Common myeloid progenitor, CD34-positive (primary cell): ENCODE measurements at regions of chr14 and their contacts with region 1.

Region 1: DNA sequence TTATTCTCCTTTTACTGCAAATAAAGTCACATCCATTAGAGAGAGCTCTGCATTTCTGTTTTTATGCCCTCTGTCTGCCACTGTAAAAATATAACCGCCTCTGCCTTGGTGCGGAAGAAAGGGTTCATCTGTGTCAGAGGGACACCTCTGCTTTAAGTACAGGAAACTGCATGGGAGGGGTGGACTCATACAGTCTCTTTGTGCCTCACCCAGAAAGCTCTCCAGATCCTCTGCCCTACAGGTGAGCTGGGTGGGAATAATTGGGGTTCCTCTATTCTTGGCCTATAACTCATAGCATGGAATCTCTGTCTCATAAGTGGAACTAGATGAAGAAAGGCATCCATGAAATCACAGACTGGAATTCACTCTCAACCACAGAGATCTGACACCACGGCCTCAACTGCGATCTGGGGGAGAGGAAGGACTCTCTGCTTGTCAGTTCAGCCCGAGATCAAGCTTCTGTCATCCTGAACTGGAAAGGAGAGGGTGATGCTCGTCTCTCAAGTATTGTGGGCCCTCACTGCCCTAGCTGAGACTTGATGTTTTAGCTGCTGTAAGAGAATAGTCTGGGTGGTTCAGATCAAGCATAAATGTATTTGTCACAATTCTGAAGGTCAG is 702.3 kb downstream of the TMEM121 start:
- DNase-seq: no peak
- H3K4me3 ChIP-seq: no peak overlapping the region
- H3K27ac ChIP-seq: no peak overlapping the region
- H3K4me1 ChIP-seq: peaks cover 6 to 34% (median 17%) of the 10 kb centered on the region in 4 experiments
- H3K27me3 ChIP-seq: no peaks in the 10 kb centered on the region

Region 2: GRCh38 chr14:106069804-106070625 is 158.6 kb before region 1 on chr14:
- CTCF ChIA-PET with region 1: no interaction called
- POLR2A ChIA-PET with region 1: no interaction called
- DNase-seq: peak; percentile 63 to 89 (median 83)
- H3K4me3 ChIP-seq: no peak overlapping the region
- H3K27ac ChIP-seq: no peak overlapping the region
- H3K4me1 ChIP-seq: peaks cover 0 to 17% (median 9%) of the 10 kb centered on the region in 4 experiments
- H3K27me3 ChIP-seq: no peaks in the 10 kb centered on the region

Region 3: GRCh38 chr14:106174206-106174605 is 54.4 kb before region 1 on chr14:
- CTCF ChIA-PET with region 1: no interaction called
- POLR2A ChIA-PET with region 1: no interaction called
- DNase-seq: peak in 2 of 3 donors; percentile 28 to 56
- H3K4me3 ChIP-seq: peak overlapping the region in 1 of 7 experiments; percentile 5
- H3K27ac ChIP-seq: no peak overlapping the region
- H3K4me1 ChIP-seq: peaks cover 0 to 3% (median 0%) of the 10 kb centered on the region in 4 experiments
- H3K27me3 ChIP-seq: peaks cover 0 to 12% (median 0%) of the 10 kb centered on the region in 5 experiments

Region 4: DNA sequence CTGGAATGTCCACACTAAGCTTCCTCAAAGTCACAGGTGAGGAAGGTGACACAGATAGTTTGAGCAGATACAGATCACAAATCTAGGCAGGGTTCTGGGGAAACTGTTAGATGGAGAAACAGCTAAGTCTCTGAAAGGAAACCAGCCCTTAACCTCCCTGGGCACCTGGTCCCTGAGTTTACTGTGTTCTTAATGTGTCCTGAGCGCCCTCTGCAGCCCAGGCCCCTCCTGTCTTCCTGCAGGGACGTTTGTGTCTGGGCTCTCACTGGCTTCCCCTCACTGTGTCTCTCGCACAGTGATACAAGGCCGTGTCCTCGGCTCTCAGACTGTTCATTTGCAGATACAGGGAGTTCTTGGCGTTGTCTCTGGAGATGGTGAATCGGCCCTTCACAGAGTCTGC is 18.0 kb before region 1 on chr14:
- CTCF ChIA-PET with region 1: interaction called, 14 read pairs
- POLR2A ChIA-PET with region 1: no interaction called
- DNase-seq: peak in 2 of 3 donors; percentile 69 to 75
- H3K4me3 ChIP-seq: no peak overlapping the region
- H3K27ac ChIP-seq: no peak overlapping the region
- H3K4me1 ChIP-seq: peaks cover 0 to 5% (median 0%) of the 10 kb centered on the region in 4 experiments
- H3K27me3 ChIP-seq: peaks cover 0 to 11% (median 0%) of the 10 kb centered on the region in 5 experiments

Region 5: GRCh38 chr14:106218174-106218573 is 10.5 kb before region 1 on chr14:
- CTCF ChIA-PET with region 1: interaction called, 10 read pairs
- POLR2A ChIA-PET with region 1: no interaction called
- DNase-seq: peak in 2 of 3 donors; percentile 65 to 77
- H3K4me3 ChIP-seq: peak overlapping the region in 1 of 7 experiments; percentile 4
- H3K27ac ChIP-seq: no peak overlapping the region
- H3K4me1 ChIP-seq: peaks cover 0 to 37% (median 14%) of the 10 kb centered on the region in 4 experiments
- H3K27me3 ChIP-seq: peaks cover 0 to 2% (median 0%) of the 10 kb centered on the region in 5 experiments

Region 6: DNA sequence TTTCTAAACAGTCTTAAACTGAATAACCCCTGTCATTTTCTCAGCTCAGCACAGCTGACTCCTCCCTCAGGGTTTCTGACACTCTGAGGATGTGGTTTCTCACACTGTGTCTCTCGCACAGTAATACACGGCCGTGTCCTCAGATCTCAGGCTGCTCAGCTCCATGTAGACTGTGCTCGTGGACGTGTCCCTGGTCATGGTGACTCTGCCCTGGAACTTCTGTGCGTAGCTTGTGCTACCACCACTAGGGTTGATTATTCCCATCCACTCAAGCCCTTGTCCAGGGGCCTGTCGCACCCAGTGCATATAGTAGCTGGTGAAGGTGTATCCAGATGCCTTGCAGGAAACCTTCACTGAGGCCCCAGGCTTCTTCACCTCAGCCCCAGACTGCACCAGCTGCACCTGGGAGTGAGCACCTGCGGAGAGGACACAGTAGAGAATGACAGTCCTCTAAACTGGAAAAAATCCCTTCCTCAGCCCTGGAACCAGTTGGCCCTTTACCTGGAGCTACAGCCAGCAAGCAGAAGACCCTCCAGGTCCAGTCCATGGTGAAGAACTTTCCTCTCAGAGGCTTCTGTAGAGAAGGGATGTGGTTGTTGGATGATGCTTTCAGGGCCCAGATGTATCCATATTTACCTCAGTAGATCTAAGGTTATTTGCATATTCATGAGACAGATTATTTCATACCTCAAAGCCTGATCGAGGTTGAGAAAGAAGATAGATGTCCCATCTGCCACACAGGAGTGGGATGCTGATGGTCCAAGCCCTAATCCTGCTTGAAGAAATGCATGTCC is 282.6 kb after region 1 on chr14:
- CTCF ChIA-PET with region 1: no interaction called
- POLR2A ChIA-PET with region 1: no interaction called
- DNase-seq: peak in 2 of 3 donors; percentile 50 to 60
- H3K4me3 ChIP-seq: no peak overlapping the region
- H3K27ac ChIP-seq: no peak overlapping the region
- H3K4me1 ChIP-seq: peaks cover 0 to 16% (median 10%) of the 10 kb centered on the region in 4 experiments
- H3K27me3 ChIP-seq: peaks cover 0 to 41% (median 5%) of the 10 kb centered on the region in 5 experiments